Activated CD4-positive, alpha-beta T cell treated with anti-CD3 and anti-CD28 coated beads for 36 hours (primary cell): ENCODE measurements at regions of chr19 and their contacts with region 1.

Region 1: GRCh38 chr19:52601025-52601973 is 31.2 kb downstream of the ZNF701 start:
- DNase-seq: peak; percentile 97
- ATAC-seq: peak; percentile 98
- H3K4me3 Mint-ChIP-seq: peak overlapping the region; percentile 86
- H3K27ac Mint-ChIP-seq: peak overlapping the region; percentile 83
- H3K4me1 Mint-ChIP-seq: peaks cover 26% of the 10 kb centered on the region
- H3K27me3 Mint-ChIP-seq: no peaks in the 10 kb centered on the region

Region 2: DNA sequence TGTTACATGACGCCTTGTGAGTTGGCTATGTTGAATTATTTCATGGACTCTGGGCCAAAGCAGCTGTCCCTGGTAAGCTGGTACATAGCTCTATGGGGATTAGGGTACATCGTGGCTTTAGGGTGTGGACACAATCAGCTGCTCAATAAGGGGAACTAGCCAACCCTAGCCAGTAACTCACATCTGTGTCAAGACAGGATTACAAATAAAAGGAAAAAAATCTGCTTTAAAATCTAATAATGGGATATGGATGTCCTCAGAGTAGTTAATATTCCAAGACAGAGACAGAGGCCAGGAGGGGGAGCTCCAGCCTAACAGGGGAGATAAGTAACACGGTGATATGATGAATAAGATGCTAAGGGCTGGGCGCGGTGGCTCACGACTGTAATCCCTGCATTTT is 353.1 kb before region 1 on chr19:
- CTCF ChIA-PET with region 1: no interaction called
- POLR2A ChIA-PET with region 1: no interaction called
- intact Hi-C with region 1: loop called in 1 of 2 experiments (anchors 5 kb)
- DNase-seq: peak; percentile 82
- ATAC-seq: peak; percentile 93
- H3K4me3 Mint-ChIP-seq: no peak overlapping the region
- H3K27ac Mint-ChIP-seq: no peak overlapping the region
- H3K4me1 Mint-ChIP-seq: no peaks in the 10 kb centered on the region
- H3K27me3 Mint-ChIP-seq: no peaks in the 10 kb centered on the region

Region 3: DNA sequence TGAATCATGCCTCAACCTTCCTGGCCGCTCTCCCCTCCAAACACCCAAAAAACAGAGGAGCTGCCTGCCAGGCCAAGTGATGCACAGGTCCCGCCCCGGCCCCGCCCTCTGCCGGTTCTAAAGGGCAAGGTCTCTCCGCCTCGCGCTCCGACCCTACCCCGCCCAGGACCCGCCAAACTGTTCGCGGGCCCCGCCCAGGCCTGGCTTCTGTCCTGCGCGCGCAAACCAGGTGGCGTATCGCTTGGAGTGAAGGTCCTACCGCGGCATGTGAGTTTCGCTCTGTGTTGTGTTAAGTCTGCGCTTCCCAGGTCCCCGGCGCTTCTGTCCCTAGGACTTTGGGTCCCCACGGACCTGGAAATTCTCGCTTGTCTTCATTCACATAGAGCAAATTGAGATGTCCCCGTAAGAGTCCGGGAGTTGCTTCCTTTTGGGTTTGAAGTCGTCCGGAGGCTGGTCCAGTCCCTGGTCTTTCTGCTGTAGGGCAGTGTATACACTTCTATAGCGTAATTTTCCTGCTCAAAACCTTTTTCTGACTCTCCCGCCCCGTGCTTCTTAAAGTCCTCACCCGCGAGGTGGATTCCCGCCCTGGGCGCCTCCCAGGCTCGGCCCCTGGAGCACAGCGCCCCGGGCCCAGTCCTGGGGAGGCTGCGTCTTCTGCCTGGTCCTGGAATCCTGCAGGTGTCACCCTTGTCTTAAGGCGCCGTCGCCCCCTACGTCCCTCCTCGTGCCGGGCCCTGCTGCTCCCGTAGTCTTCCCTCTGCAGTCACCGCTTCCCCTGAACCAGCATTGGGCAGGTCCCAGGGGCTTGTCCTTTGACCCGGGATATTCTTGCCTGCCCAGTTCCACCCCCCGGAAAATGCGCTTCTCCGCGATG is 108.5 kb before region 1 on chr19:
- CTCF ChIA-PET with region 1: no interaction called
- POLR2A ChIA-PET with region 1: no interaction called
- intact Hi-C with region 1: no loop called
- DNase-seq: peak; percentile 54
- ATAC-seq: peak; percentile 58
- H3K4me3 Mint-ChIP-seq: no peak overlapping the region
- H3K27ac Mint-ChIP-seq: no peak overlapping the region
- H3K4me1 Mint-ChIP-seq: no peaks in the 10 kb centered on the region
- H3K27me3 Mint-ChIP-seq: peaks cover 7% of the 10 kb centered on the region

Region 4: DNA sequence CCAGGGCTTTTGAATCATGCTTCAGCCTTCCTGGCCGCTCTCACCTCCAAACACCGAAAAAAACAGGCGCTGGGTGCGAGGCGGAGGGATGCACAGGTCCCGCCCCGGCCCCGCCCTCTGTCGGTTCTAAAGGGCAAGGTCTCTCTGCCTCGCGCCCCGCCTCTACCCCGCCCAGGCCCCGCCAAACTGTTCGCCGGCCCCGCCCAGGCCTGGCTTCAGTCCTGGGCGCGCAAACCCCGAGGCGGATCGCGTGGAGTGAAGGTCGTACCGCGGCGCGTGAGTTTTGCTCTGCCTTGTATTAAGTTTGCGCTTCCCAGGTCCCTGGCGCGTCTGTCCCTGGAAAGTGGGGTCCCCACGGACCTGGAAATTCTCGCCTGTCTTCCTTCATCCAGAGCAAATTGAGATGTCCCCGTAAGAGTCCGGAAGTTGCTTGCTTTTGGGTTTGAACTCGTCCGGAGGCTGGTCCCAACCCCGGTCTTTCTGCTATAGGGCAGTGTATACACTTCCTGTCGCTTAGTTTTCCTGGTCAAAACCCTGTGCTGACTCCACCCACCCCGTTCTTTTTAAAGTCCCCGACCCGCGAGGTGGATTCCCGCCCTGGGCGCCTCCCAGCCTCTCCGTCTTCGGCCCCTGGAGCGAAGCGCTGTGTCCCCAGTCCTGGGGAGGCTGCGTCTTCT is 65.4 kb before region 1 on chr19:
- CTCF ChIA-PET with region 1: no interaction called
- POLR2A ChIA-PET with region 1: no interaction called
- intact Hi-C with region 1: loop called in 1 of 2 experiments (anchors 1 kb)
- DNase-seq: peak; percentile 97
- ATAC-seq: peak; percentile 94
- H3K4me3 Mint-ChIP-seq: peak overlapping the region; percentile 83
- H3K27ac Mint-ChIP-seq: peak overlapping the region; percentile 94
- H3K4me1 Mint-ChIP-seq: peaks cover 28% of the 10 kb centered on the region
- H3K27me3 Mint-ChIP-seq: no peaks in the 10 kb centered on the region

Region 5: GRCh38 chr19:52570000-52570861 is 31.1 kb before region 1 on chr19 and contains the start of gene ZNF701:
- CTCF ChIA-PET with region 1: no interaction called
- POLR2A ChIA-PET with region 1: no interaction called
- intact Hi-C with region 1: loop called (anchors 1 kb)
- DNase-seq: peak; percentile 98
- ATAC-seq: peak; percentile 99
- H3K4me3 Mint-ChIP-seq: peak within 1 kb of the TSS; percentile 88
- H3K27ac Mint-ChIP-seq: peak within 1 kb of the TSS; percentile 96
- H3K4me1 Mint-ChIP-seq: peaks cover 27% of the 10 kb centered on the region
- H3K27me3 Mint-ChIP-seq: no peaks in the 10 kb centered on the region
- total RNA-seq, gene ZNF701: 19.0 to 21.5 TPM

Region 6: GRCh38 chr19:52690369-52691214 is 89.3 kb after region 1 on chr19:
- CTCF ChIA-PET with region 1: no interaction called
- POLR2A ChIA-PET with region 1: no interaction called
- intact Hi-C with region 1: loop called in 1 of 2 experiments (anchors 1 kb)
- DNase-seq: peak; percentile 96
- ATAC-seq: peak; percentile 95
- H3K4me3 Mint-ChIP-seq: peak overlapping the region; percentile 90
- H3K27ac Mint-ChIP-seq: peak overlapping the region; percentile 96
- H3K4me1 Mint-ChIP-seq: peaks cover 27% of the 10 kb centered on the region
- H3K27me3 Mint-ChIP-seq: no peaks in the 10 kb centered on the region

Region 7: GRCh38 chr19:52710538-52710937 is 109.2 kb after region 1 on chr19:
- CTCF ChIA-PET with region 1: no interaction called
- POLR2A ChIA-PET with region 1: no interaction called
- intact Hi-C with region 1: no loop called
- DNase-seq: no peak
- ATAC-seq: no peak
- H3K4me3 Mint-ChIP-seq: no peak overlapping the region
- H3K27ac Mint-ChIP-seq: no peak overlapping the region
- H3K4me1 Mint-ChIP-seq: peaks cover 3% of the 10 kb centered on the region
- H3K27me3 Mint-ChIP-seq: no peaks in the 10 kb centered on the region